Posterior cingulate gyrus (tissue), 11 donors: ENCODE measurements at regions of chr6 and their contacts with region 1.

Region 1: GRCh38 chr6:142112451-142113061 is 20.2 kb upstream of the GJE1 start:
- DNase-seq: peak in 8 of 10 donors; percentile 42 to 85 (median 71)

Region 2: GRCh38 chr6:141677598-141678211 is 434.9 kb before region 1 on chr6:
- intact Hi-C with region 1: loop called (anchors 2 kb)
- DNase-seq: no peak

Region 3: GRCh38 chr6:141990840-141991239 is 121.7 kb before region 1 on chr6:
- intact Hi-C with region 1: loop called (anchors 5 kb)
- DNase-seq: no peak

Region 4: GRCh38 chr6:142058551-142059290 is 53.8 kb before region 1 on chr6:
- intact Hi-C with region 1: no loop called
- DNase-seq: no peak